Endothelial cell of umbilical vein (primary cell): ENCODE measurements at regions of chr5 and their contacts with region 1.

Region 1: DNA sequence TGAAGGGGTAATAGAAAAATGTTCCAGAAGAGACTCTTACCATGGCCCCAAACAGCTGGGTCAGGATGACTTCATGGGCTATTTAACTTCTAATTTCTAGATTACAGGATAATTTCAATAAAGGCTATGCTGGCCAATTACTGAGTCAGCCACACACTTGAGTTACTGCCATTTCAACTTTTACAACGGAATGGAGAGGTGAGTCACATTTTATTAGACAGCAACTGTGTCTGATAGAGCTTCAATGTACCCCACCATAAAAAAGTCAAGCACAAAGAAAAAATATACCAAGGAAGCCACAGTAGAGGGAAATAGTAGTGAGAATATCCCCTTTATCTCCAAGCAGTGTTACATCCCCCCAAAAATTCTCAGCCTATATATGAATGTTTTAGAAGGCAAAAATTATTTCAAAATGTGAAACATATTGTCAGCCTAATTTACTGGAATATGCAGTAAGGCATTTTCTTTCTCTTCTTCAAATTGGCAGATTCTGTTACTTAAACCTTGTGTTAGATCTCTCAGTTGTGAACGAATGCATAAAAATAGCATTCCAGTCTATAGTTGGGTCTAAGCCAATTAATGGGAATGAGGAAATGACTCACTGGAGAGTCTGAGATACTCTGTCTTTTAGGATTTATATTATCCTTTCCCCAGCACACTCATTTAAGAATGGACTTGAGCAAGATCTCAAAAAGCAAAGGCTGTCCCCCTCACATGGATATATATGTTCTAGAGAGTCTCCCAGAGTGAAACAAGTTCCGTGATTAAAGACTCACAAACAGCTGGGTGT is 47.1 kb upstream of the RAI14 start:
- DNase-seq: peak; percentile 95
- H3K4me3 ChIP-seq: peak overlapping the region in 1 of 3 experiments; percentile 25
- H3K27ac ChIP-seq: peak overlapping the region; percentile 99
- H3K4me1 ChIP-seq: peaks cover 31% of the 10 kb centered on the region
- H3K27me3 ChIP-seq: no peaks in the 10 kb centered on the region
- CTCF ChIP-seq: no peak
- POLR2A ChIP-seq: no peak

Region 2: GRCh38 chr5:34598177-34598794 is 10.8 kb before region 1 on chr5:
- CTCF ChIA-PET with region 1: interaction called, 15 read pairs
- POLR2A ChIA-PET with region 1: no interaction called
- dilution Hi-C with region 1: no loop called
- intact Hi-C with region 1: loop called (anchors 1 kb)
- DNase-seq: peak; percentile 90
- H3K4me3 ChIP-seq: no peak overlapping the region
- H3K27ac ChIP-seq: peak overlapping the region; percentile 84
- H3K4me1 ChIP-seq: peaks cover 25% of the 10 kb centered on the region
- H3K27me3 ChIP-seq: no peaks in the 10 kb centered on the region
- CTCF ChIP-seq: no peak
- POLR2A ChIP-seq: no peak

Region 3: DNA sequence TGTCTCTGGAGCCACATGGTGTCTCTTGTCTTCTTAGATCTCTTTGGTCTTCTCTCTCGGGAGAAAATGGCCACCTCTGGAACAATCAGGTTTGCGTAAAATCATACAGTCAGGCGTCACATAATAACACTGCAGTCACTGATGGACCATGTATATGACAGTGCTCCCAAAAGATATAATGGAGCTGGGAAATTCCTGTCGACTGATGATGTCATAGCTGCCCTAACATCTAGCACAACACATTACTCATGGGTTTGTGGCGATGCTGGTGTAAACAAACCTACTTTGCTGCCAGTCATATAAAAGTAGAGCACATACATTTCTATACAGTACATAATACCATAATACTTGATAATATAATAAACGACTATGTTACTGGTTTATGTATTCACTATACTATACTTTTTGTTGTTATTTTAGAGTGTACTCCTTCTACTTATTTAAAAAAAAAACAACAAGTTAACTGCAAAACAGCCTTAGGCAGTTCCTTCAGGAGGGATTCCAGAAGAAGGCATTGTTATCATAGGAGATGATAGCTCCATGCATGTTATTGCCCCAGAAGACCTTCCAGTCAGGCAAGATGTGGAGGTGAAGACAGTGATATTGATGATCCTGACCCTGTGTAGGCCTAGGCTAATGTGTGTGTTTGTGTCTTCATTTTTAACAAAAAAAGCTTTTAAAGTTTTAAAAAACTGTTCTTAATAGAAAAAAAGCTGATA is 17.1 kb after region 1 on chr5:
- CTCF ChIA-PET with region 1: interaction called, 6 read pairs
- POLR2A ChIA-PET with region 1: no interaction called
- dilution Hi-C with region 1: no loop called
- intact Hi-C with region 1: loop called (anchors 1 kb)
- DNase-seq: peak; percentile 88
- H3K4me3 ChIP-seq: no peak overlapping the region
- H3K27ac ChIP-seq: peak overlapping the region; percentile 78
- H3K4me1 ChIP-seq: peaks cover 44% of the 10 kb centered on the region
- H3K27me3 ChIP-seq: no peaks in the 10 kb centered on the region
- CTCF ChIP-seq: no peak
- POLR2A ChIP-seq: no peak

Region 4: DNA sequence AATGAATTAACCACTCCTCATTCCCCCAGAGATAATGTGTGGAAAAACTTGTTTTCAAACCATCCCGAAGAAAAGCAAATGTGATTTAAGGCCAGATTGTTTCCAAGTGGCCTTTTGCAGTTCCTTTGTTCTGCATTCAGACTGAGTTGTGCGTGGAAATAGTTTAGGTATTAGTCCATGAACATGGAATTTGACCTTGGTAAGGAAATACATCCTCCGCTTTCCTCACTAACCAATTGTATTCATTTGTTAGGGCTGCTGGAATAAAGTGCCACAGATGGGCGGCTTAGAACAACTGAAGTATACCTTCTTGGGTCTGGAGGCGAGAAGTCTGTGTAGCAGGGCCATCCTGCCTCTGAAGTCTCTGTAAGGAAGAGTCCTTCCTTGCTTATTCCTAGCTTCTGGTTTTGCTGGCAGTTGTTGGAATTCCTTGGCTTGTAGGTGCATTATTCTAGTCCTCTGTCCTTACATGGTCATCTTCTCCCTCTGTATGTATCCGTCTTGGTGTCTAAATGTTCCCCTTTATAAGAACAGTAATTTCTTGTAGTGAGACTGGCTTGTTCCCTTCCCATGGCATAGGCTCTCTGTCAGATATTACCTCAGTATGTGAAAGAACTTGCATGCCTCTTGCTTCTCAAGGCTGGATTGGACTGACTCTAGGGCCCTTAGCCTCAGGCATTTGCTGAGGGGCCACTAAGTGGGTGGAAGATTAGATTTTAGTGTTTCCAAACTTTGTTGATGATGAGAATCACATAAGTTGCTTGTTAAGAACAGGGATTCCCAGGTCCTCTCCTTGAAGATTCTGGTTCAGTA is 101.0 kb after region 1 on chr5:
- CTCF ChIA-PET with region 1: no interaction called
- POLR2A ChIA-PET with region 1: no interaction called
- dilution Hi-C with region 1: no loop called
- intact Hi-C with region 1: loop called (anchors 2 kb)
- DNase-seq: peak; percentile 94
- H3K4me3 ChIP-seq: peak overlapping the region in 1 of 3 experiments; percentile 3
- H3K27ac ChIP-seq: peak overlapping the region; percentile 97
- H3K4me1 ChIP-seq: peaks cover 96% of the 10 kb centered on the region
- H3K27me3 ChIP-seq: no peaks in the 10 kb centered on the region
- CTCF ChIP-seq: no peak
- POLR2A ChIP-seq: peak; percentile 84